Spleen (tissue), 13 donors: ENCODE measurements at regions of chr5 and their contacts with region 1.

Region 1: DNA sequence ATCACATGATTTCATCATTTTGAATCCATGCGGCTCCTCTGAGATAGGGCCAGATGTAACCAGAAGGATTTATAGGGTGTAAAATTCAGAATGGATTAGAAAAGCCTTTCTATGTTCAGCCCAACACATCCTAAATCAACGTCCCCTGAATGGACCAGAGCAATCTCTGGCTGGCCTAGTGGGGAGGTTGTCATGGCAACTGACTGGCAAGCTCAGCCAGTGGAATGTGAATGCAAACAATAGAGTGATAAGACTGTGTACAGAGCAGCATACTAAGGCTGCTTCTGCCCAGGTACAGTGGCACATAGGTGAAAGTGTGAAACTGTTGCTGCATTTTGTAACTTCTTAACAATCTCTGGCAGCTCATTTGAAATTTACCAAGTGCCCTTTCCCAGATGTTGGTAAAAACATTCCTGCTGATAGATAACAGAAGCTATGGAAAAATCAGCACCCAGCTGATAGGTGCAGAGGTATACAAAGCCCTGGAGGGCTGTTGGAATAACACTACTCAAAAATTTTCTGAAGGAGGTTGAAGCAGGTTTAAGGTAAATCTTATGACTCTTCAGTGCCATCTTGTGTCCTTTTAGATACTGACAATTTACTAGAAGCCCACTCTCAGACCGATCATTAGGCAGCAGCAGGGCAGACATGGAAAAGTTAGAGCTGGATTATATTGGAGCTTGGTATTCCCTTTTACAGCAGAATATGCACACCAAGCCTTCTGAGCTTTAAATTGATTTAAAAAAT is 267.2 kb downstream of the RAB3C start:
- DNase-seq: no peak
- H3K4me3 ChIP-seq: no peak overlapping the region
- H3K27ac ChIP-seq: no peak overlapping the region
- H3K4me1 ChIP-seq: peaks cover 0 to 4% (median 0%) of the 10 kb centered on the region in 6 donors
- H3K27me3 ChIP-seq: peaks cover 0 to 5% (median 0%) of the 10 kb centered on the region in 7 donors
- CTCF ChIP-seq: peak; percentile 13 to 66 (median 48)
- POLR2A ChIP-seq: no peak

Region 2: DNA sequence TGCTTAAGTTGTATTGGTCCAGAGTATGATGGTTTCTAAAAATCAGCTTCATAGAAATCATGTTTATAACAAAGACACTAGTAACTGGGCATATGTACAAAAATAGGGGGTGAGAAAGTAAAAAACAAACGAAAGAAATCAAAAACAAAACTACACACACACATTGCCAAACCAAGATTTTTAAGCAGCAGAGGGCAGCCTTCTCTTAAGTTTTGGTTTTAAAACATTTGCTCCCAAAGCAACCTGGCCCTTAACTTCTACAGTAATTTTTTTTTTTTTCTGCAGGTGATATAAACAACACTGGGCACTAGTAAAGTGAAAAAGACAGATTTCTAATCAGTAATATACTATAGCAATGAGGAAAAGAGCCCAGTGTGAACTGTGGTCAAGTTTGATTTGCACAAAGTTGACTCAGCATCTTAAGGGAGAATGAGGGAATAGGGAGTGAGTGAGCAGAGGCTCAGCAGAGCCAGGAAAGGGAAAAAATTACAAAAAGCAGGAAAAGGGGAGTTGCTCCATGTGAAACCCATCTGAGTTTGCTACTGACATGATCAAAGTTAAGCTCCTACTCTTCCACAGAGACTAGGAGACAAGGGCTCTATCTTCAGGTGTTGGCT is 372.2 kb before region 1 on chr5:
- intact Hi-C with region 1: loop called (anchors 5 kb)
- DNase-seq: no peak
- H3K4me3 ChIP-seq: no peak overlapping the region
- H3K27ac ChIP-seq: no peak overlapping the region
- H3K4me1 ChIP-seq: peaks cover 0 to 16% (median 0%) of the 10 kb centered on the region in 6 donors
- H3K27me3 ChIP-seq: no peaks in the 10 kb centered on the region
- CTCF ChIP-seq: peak in 7 of 11 experiments; percentile 24 to 49 (median 36)
- POLR2A ChIP-seq: no peak